Motor neuron (in vitro differentiated cells): ENCODE measurements at regions of chr9 and their contacts with region 1.

Region 1: GRCh38 chr9:121545875-121546423 is 46.3 kb upstream of the GGTA1 start:
- ATAC-seq: peak; percentile 87 to 97 (median 93)
- H3K4me3 ChIP-seq: peak overlapping the region in 1 of 5 donors; percentile 16
- H3K27ac ChIP-seq: no peak overlapping the region
- H3K4me1 ChIP-seq: peaks cover 0 to 8% of the 10 kb centered on the region in 2 donors

Region 2: DNA sequence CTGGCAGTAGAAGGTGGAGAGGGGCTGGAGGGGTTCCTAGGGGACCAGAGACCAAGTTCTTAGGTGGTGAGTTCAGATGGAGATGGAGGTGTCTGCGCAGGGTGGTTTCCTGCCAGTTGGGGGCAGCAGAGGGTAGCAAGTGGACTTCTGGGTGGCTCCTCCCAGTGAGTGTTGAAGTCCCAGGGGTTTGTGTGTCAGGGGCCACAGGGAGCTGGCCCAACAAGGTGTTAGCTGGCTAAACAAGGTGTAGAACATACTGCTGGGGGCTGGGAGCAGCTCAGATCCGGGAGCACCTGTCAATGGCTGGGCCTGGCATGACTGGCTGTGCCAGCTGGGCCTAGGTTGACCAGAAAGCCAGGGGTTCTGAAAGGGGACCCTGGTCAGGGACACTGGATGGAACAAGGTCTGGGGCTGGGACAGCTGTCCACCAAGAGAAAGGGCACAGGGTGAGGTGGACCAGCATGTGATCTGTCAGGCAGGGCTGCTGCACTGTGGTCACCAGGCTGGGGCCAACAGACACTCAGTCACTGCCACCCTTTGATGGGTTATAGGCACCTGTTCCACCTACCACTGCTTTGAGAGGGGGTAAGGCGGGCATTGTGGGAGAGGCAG is 141.1 kb after region 1 on chr9:
- in situ Hi-C with region 1: loop called in 1 of 9 experiments (anchors 25 kb)
- ATAC-seq: peak; percentile 26 to 90 (median 44)
- H3K4me3 ChIP-seq: no peak overlapping the region
- H3K27ac ChIP-seq: no peak overlapping the region
- H3K4me1 ChIP-seq: peaks cover 30 to 35% of the 10 kb centered on the region in 2 donors

Region 3: DNA sequence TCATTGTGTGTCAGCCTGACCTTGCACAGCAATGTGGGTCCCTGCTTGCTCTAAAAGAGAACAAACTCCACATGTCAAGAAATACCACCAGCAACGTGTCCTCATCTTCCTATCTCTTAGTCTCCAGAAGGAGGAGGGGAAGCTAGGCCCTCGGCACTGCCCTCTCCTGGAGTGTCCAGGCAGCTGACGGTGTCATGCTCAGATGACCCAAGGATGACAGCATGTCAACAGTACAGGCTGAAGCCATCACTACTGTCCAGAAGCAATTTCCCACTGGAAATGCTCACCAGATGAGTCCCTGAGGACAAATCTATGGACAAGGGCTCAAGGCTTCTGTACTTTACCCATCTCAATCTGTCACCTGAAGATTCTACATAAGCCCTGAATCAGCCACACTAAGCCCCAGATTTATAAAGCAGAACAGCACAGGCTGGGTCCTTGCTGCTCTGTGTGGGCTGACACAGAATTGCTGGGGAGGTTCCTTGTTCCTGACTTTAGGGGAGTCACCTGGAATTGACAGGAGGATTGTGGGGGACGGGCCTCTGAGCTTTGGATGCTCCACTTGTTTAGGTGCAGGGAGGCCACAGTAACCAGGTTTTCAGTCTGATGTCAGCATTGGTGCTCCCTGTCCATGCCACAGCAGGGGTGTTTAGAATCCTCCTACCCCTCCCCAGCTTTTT is 315.7 kb after region 1 on chr9:
- in situ Hi-C with region 1: loop called in 1 of 9 experiments (anchors 25 kb)
- ATAC-seq: peak; percentile 58 to 92 (median 78)
- H3K4me3 ChIP-seq: no peak overlapping the region
- H3K27ac ChIP-seq: peak overlapping the region in 1 of 2 donors; percentile 7
- H3K4me1 ChIP-seq: peaks cover 41 to 50% of the 10 kb centered on the region in 2 donors

Region 4: GRCh38 chr9:121992571-121993212 is 446.7 kb after region 1 on chr9:
- in situ Hi-C with region 1: loop called in 6 of 9 experiments (anchors 10 to 25 kb)
- ATAC-seq: peak; percentile 83 to 95 (median 90)
- H3K4me3 ChIP-seq: no peak overlapping the region
- H3K27ac ChIP-seq: no peak overlapping the region
- H3K4me1 ChIP-seq: peaks cover 16 to 17% of the 10 kb centered on the region in 2 donors

Region 5: GRCh38 chr9:122350638-122351355 is 804.8 kb after region 1 on chr9:
- in situ Hi-C with region 1: loop called in 2 of 9 experiments (anchors 25 kb)
- ATAC-seq: peak; percentile 69 to 95 (median 91)
- H3K4me3 ChIP-seq: no peak overlapping the region
- H3K27ac ChIP-seq: no peak overlapping the region
- H3K4me1 ChIP-seq: no peaks in the 10 kb centered on the region

Region 6: DNA sequence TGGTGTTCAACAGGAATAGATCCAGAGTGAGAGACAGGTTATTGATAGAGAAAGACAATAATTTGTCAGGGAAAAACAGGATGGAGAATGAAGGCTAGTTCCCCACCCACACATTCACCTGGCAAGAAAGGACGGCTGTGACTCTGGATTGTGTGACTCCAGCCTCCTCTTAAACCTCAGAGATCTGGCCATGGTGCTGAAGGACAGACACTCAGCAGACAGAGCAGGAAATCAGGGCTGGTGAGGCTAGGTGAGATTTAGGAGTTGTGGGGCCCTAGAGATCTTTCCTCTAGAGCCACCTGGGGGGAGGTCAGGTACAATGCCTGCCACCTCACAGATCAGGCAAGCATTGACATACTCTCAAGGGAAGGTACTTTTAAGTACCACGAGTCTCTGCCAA is 1096.3 kb after region 1 on chr9:
- in situ Hi-C with region 1: no loop called
- ATAC-seq: no peak
- H3K4me3 ChIP-seq: no peak overlapping the region
- H3K27ac ChIP-seq: no peak overlapping the region
- H3K4me1 ChIP-seq: no peaks in the 10 kb centered on the region